Activated CD4-positive, alpha-beta memory T cell treated with anti-CD3 and anti-CD28 coated beads, Interleukin-2, amount 10 ng/mL, durations not matched to agents 7 days and 5 days (primary cell): ENCODE measurements at regions of chr5 and their contacts with region 1.

Region 1: GRCh38 chr5:142881076-142881783 is 111.1 kb downstream of the ARHGAP26 start:
- DNase-seq: no peak
- H3K4me3 Mint-ChIP-seq: no peak overlapping the region
- H3K27ac Mint-ChIP-seq: no peak overlapping the region
- H3K4me1 Mint-ChIP-seq: peaks cover 23% of the 10 kb centered on the region
- H3K27me3 Mint-ChIP-seq: no peaks in the 10 kb centered on the region

Region 2: GRCh38 chr5:142720641-142721271 is 160.5 kb before region 1 on chr5:
- CTCF ChIA-PET with region 1: interaction called, 48 read pairs
- POLR2A ChIA-PET with region 1: no interaction called
- DNase-seq: no peak
- H3K4me3 Mint-ChIP-seq: no peak overlapping the region
- H3K27ac Mint-ChIP-seq: no peak overlapping the region
- H3K4me1 Mint-ChIP-seq: peaks cover 4% of the 10 kb centered on the region
- H3K27me3 Mint-ChIP-seq: peaks cover 2% of the 10 kb centered on the region

Region 3: GRCh38 chr5:142894749-142895148 is 13.5 kb after region 1 on chr5:
- CTCF ChIA-PET with region 1: interaction called, 29 read pairs
- POLR2A ChIA-PET with region 1: no interaction called
- DNase-seq: no peak
- H3K4me3 Mint-ChIP-seq: no peak overlapping the region
- H3K27ac Mint-ChIP-seq: no peak overlapping the region
- H3K4me1 Mint-ChIP-seq: peaks cover 7% of the 10 kb centered on the region
- H3K27me3 Mint-ChIP-seq: no peaks in the 10 kb centered on the region